CD4-positive, alpha-beta T cell (primary cell): ENCODE measurements at regions of chr9 and their contacts with region 1.

Region 1: GRCh38 chr9:129177791-129178559 is at the start of gene IER5L:
- DNase-seq: peak; percentile 87 to 96 (median 93)
- ATAC-seq: peak; percentile 89
- H3K4me3 ChIP-seq: peak within 1 kb of the TSS; percentile 75
- H3K4me3 Mint-ChIP-seq: peak within 1 kb of the TSS; percentile 92
- H3K27ac ChIP-seq: no peak within 1 kb of the TSS
- H3K27ac Mint-ChIP-seq: peak within 1 kb of the TSS; percentile 47
- H3K4me1 ChIP-seq: peaks cover 47% of the 10 kb centered on the region
- H3K4me1 Mint-ChIP-seq: peaks cover 7% of the 10 kb centered on the region
- H3K27me3 ChIP-seq: peaks cover 0 to 7% of the 10 kb centered on the region in 2 experiments
- H3K27me3 Mint-ChIP-seq: peaks cover 4% of the 10 kb centered on the region
- CTCF ChIP-seq: no peak
- total RNA-seq, gene IER5L: 5.6 to 6.4 TPM

Region 2: DNA sequence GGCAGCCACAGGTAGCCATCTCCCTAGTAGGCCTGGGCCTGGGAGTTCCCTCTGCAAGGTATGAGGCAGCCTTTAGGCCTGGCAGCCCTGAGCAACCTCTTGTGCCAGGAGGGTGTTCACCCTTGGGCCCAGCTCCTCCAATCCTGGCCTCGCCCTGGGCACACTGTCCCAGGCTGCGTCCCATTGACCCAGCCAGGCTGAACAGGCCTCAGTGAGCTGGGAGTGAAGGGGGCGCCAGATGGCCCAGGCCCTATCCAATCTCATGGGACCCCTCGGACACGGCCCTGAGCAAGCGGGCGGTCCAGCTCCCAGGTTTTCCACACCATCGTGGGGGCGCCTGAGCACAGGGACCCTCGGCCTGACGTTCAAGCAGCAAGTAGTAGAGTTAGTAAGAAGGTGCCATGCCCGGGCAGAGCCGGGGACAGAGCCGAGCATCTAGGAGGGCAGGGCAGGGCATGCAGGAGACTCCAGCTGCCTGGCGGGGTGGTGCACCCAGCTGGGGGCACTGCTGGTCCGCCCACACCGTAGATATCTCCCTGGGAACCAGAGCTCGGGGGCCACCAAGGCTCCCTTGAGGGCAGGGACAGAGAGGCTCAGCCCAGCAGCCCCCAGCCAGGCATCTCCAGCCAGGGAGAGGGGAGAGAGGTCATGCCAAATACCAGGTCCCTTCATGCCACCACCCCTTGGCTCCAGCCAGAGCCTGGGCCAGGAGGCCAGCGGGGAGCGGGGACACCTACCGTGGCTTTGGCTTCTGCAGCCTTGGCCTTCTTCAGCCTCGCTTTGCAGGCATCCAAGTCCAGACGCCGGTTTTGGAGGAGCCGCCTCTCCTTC is 164.1 kb before region 1 on chr9:
- CTCF ChIA-PET with region 1: no interaction called
- POLR2A ChIA-PET with region 1: no interaction called
- intact Hi-C with region 1: no loop called
- DNase-seq: no peak
- ATAC-seq: no peak
- H3K4me3 ChIP-seq: no peak overlapping the region
- H3K4me3 Mint-ChIP-seq: no peak overlapping the region
- H3K27ac ChIP-seq: no peak overlapping the region
- H3K27ac Mint-ChIP-seq: no peak overlapping the region
- H3K4me1 ChIP-seq: no peaks in the 10 kb centered on the region
- H3K4me1 Mint-ChIP-seq: no peaks in the 10 kb centered on the region
- H3K27me3 ChIP-seq: no peaks in the 10 kb centered on the region
- H3K27me3 Mint-ChIP-seq: no peaks in the 10 kb centered on the region
- CTCF ChIP-seq: no peak

Region 3: DNA sequence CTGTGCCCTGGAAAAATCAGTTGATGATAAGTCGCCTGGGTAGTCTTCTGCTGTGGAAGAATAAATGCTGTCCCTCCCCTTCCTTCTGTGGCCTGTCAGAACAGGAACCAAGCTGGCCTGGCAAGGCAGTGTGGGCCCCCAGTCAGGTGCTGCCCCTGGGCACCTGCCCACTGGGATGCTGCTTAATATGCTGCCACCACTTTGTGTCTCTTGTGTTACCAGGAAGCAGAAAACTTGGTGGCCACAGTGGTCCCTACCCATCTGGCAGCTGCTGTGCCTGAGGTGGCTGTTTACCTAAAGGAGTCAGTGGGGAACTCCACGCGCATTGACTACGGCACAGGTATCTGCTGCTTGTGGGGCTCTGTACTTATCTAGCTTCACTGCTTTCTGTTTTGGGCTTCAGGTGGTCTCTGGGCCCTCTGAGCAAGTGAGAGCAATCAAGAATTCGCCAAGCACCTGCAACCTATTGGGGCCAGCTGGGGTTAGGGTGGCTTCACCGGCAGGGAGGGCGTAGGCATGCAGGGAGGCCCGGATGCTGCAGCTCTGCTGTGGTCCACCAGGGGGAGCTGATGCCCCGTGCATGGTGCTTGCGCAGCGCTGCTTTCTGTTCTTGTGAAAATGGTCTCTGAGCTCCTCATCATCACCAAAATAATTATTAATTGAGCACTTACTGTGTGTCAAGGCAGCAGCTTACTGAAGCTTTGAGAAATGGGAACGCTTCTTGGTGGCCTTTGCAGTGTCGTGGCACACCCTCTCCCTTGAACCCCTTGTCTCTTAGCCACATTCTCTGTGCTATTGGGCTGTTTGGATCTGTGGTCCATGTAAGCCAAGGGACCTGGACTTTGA is 46.5 kb before region 1 on chr9:
- CTCF ChIA-PET with region 1: interaction called, 24 read pairs
- POLR2A ChIA-PET with region 1: interaction called, 3 read pairs
- intact Hi-C with region 1: no loop called
- DNase-seq: peak; percentile 76 to 91 (median 84)
- ATAC-seq: peak; percentile 99
- H3K4me3 ChIP-seq: no peak overlapping the region
- H3K4me3 Mint-ChIP-seq: no peak overlapping the region
- H3K27ac ChIP-seq: peak overlapping the region in 1 of 2 donors; percentile 22
- H3K27ac Mint-ChIP-seq: no peak overlapping the region
- H3K4me1 ChIP-seq: peaks cover 12% of the 10 kb centered on the region
- H3K4me1 Mint-ChIP-seq: peaks cover 7% of the 10 kb centered on the region
- H3K27me3 ChIP-seq: no peaks in the 10 kb centered on the region
- H3K27me3 Mint-ChIP-seq: no peaks in the 10 kb centered on the region
- CTCF ChIP-seq: peak; percentile 99

Region 4: DNA sequence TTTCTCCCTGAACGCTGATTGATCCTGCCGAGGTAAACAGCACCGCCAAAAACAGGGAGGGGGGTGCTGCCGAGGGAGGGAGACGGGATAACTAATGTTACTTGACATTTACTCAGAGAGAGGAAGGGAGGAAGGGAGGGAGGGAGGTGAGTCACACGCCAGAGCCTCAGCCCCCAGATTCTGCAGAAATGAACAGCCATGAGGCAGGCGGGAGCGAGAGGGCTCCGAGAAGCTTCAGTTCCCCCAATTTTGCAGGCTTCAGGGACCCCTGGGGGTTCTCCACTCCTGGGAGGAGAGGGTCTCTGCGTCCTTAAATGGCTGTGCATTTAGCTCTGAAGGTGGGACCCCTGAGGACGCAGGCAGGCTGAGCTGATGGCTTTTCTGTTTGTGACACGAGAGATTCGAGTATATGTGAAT is 59.2 kb after region 1 on chr9:
- CTCF ChIA-PET with region 1: interaction called, 3 read pairs
- POLR2A ChIA-PET with region 1: interaction called, 112 read pairs
- intact Hi-C with region 1: loop called in 1 of 2 experiments (anchors 2 kb)
- DNase-seq: peak in 13 of 14 experiments; percentile 22 to 81 (median 53)
- ATAC-seq: peak; percentile 62
- H3K4me3 ChIP-seq: peak overlapping the region; percentile 53
- H3K4me3 Mint-ChIP-seq: peak overlapping the region; percentile 94
- H3K27ac ChIP-seq: peak overlapping the region; percentile 56 to 79
- H3K27ac Mint-ChIP-seq: peak overlapping the region; percentile 99
- H3K4me1 ChIP-seq: peaks cover 52% of the 10 kb centered on the region
- H3K4me1 Mint-ChIP-seq: peaks cover 75% of the 10 kb centered on the region
- H3K27me3 ChIP-seq: no peaks in the 10 kb centered on the region
- H3K27me3 Mint-ChIP-seq: no peaks in the 10 kb centered on the region
- CTCF ChIP-seq: no peak

Region 5: GRCh38 chr9:129333953-129334724 is 156.2 kb after region 1 on chr9:
- CTCF ChIA-PET with region 1: no interaction called
- POLR2A ChIA-PET with region 1: interaction called, 3 read pairs
- intact Hi-C with region 1: loop called in 1 of 2 experiments (anchors 5 kb)
- DNase-seq: peak in 10 of 14 experiments; percentile 14 to 66 (median 36)
- ATAC-seq: peak; percentile 63
- H3K4me3 ChIP-seq: peak overlapping the region; percentile 29
- H3K4me3 Mint-ChIP-seq: peak overlapping the region; percentile 40
- H3K27ac ChIP-seq: no peak overlapping the region
- H3K27ac Mint-ChIP-seq: peak overlapping the region; percentile 75
- H3K4me1 ChIP-seq: peaks cover 37% of the 10 kb centered on the region
- H3K4me1 Mint-ChIP-seq: peaks cover 27% of the 10 kb centered on the region
- H3K27me3 ChIP-seq: no peaks in the 10 kb centered on the region
- H3K27me3 Mint-ChIP-seq: no peaks in the 10 kb centered on the region
- CTCF ChIP-seq: no peak

Region 6: GRCh38 chr9:129370770-129371169 is 192.8 kb after region 1 on chr9:
- CTCF ChIA-PET with region 1: no interaction called
- POLR2A ChIA-PET with region 1: no interaction called
- intact Hi-C with region 1: no loop called
- DNase-seq: no peak
- ATAC-seq: no peak
- H3K4me3 ChIP-seq: no peak overlapping the region
- H3K4me3 Mint-ChIP-seq: no peak overlapping the region
- H3K27ac ChIP-seq: no peak overlapping the region
- H3K27ac Mint-ChIP-seq: no peak overlapping the region
- H3K4me1 ChIP-seq: no peaks in the 10 kb centered on the region
- H3K4me1 Mint-ChIP-seq: no peaks in the 10 kb centered on the region
- H3K27me3 ChIP-seq: no peaks in the 10 kb centered on the region
- H3K27me3 Mint-ChIP-seq: no peaks in the 10 kb centered on the region
- CTCF ChIP-seq: no peak

Region 7: GRCh38 chr9:129460323-129461261 is 282.6 kb after region 1 on chr9:
- CTCF ChIA-PET with region 1: no interaction called
- POLR2A ChIA-PET with region 1: interaction called, 4 read pairs
- intact Hi-C with region 1: loop called in 1 of 2 experiments (anchors 5 kb)
- DNase-seq: peak; percentile 71 to 96 (median 86)
- ATAC-seq: peak; percentile 74
- H3K4me3 ChIP-seq: peak overlapping the region; percentile 55
- H3K4me3 Mint-ChIP-seq: peak overlapping the region; percentile 73
- H3K27ac ChIP-seq: peak overlapping the region; percentile 59 to 87
- H3K27ac Mint-ChIP-seq: peak overlapping the region; percentile 89
- H3K4me1 ChIP-seq: peaks cover 60% of the 10 kb centered on the region
- H3K4me1 Mint-ChIP-seq: peaks cover 35% of the 10 kb centered on the region
- H3K27me3 ChIP-seq: no peaks in the 10 kb centered on the region
- H3K27me3 Mint-ChIP-seq: no peaks in the 10 kb centered on the region
- CTCF ChIP-seq: no peak

Region 8: DNA sequence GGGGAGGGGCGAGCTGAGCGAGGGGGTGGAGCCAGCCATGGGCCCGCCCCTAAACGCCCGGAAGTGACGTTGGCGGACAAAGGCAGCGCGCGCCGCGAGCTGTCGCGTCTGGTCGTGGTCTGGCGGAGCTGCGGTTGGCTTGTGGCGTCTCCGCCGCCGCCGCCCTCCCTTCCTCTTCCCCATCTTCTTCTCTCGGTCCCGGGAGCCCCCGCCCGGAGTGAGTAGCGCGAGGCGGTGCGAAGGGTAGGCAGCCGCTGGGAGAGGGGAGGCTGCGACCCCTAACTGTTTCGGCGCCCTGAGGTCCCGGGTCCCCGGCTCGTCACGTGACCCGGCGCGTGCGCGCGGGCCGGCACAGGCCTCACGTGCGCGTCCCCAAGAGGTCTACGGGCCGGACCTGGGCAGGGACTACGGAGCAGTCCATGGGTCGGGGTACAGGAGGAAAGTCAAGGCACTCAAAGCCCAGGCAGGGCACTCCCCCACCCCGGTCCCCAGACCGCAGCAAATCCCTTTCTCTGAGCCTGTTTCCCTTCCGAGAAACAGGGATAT is 448.2 kb after region 1 on chr9 and contains the start of gene NTMT1:
- CTCF ChIA-PET with region 1: interaction called, 10 read pairs
- POLR2A ChIA-PET with region 1: interaction called, 19 read pairs
- intact Hi-C with region 1: loop called in 1 of 2 experiments (anchors 5 kb)
- DNase-seq: peak; percentile 85 to 97 (median 90)
- ATAC-seq: peak; percentile 65
- H3K4me3 ChIP-seq: peak within 1 kb of the TSS; percentile 75
- H3K4me3 Mint-ChIP-seq: peak within 1 kb of the TSS; percentile 94
- H3K27ac ChIP-seq: peak within 1 kb of the TSS; percentile 77 to 98
- H3K27ac Mint-ChIP-seq: peak within 1 kb of the TSS; percentile 94
- H3K4me1 ChIP-seq: peaks cover 70% of the 10 kb centered on the region
- H3K4me1 Mint-ChIP-seq: peaks cover 63% of the 10 kb centered on the region
- H3K27me3 ChIP-seq: peaks cover 6 to 10% of the 10 kb centered on the region in 2 experiments
- H3K27me3 Mint-ChIP-seq: peaks cover 13% of the 10 kb centered on the region
- CTCF ChIP-seq: no peak
- total RNA-seq, gene NTMT1: 50.7 to 52.5 TPM